GM23248 (cell line): ENCODE measurements at regions of chr1 and their contacts with region 1.

Region 1: GRCh38 chr1:119659628-119660027 is 11.6 kb upstream of the ZNF697 start:
- DNase-seq: no peak
- H3K4me3 ChIP-seq: no peak overlapping the region
- H3K27ac ChIP-seq: no peak overlapping the region
- H3K4me1 ChIP-seq: 0 out of 2 replicates have a peak, but pooled peaks cover 6% of the 10 kb centered on the region
- H3K27me3 ChIP-seq: no peaks in the 10 kb centered on the region

Region 2: GRCh38 chr1:118815909-118816308 is 843.7 kb before region 1 on chr1:
- in situ Hi-C with region 1: no loop called
- DNase-seq: peak; percentile 17
- H3K4me3 ChIP-seq: no peak overlapping the region
- H3K27ac ChIP-seq: no peak overlapping the region
- H3K4me1 ChIP-seq: no peaks in the 10 kb centered on the region
- H3K27me3 ChIP-seq: no peaks in the 10 kb centered on the region

Region 3: DNA sequence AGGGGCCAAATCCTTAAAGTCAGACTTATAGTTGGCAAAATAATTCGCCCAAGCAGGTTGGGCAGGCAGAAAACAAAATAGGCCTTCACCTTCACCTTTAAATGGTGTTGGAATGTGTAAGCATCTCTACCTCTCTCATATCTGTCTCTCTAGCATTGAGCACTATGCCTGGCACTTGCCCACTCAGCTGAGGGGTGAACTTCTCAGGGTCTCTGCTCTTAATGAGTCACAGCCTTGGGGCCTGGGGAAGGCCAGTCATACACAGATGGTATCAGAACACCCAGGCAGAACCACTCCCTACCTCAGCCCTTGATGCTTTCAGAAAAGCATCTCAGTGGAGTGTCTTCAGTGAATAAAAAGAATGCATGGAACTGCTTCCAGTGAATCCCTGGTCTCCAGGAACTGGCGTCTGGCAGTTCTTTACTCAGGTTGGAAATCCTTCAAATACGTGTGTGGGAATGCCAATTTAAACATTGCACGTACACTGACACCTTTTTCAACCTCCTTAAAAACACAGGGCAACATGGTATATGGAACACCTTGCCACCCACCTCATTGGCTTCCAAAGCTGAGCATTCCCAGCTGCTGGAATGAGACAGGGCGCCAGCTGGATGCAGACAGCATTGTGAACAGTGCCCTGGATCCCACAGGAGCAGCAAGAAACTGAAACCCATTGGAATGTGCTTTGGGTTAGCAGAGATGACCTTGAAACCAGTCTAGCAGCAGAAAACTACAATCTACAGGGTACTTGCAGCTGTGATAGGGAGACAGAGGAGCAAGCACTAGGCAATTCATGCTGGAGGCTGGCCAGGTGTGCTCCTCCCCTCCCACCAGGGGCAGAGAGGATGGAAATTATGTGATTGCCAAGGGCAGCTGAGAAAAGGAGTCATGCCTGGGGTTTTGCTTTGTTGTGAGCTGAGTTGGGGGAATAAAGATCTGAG is 41.6 kb before region 1 on chr1:
- in situ Hi-C with region 1: loop called (anchors 5 kb)
- DNase-seq: no peak
- H3K4me3 ChIP-seq: no peak overlapping the region
- H3K27ac ChIP-seq: no peak overlapping the region
- H3K4me1 ChIP-seq: no peaks in the 10 kb centered on the region; the same call in 1 of the 2 replicates
- H3K27me3 ChIP-seq: no peaks in the 10 kb centered on the region